ENCODE measurements at regions of chr19 and their contacts with region 1.

Region 1: DNA sequence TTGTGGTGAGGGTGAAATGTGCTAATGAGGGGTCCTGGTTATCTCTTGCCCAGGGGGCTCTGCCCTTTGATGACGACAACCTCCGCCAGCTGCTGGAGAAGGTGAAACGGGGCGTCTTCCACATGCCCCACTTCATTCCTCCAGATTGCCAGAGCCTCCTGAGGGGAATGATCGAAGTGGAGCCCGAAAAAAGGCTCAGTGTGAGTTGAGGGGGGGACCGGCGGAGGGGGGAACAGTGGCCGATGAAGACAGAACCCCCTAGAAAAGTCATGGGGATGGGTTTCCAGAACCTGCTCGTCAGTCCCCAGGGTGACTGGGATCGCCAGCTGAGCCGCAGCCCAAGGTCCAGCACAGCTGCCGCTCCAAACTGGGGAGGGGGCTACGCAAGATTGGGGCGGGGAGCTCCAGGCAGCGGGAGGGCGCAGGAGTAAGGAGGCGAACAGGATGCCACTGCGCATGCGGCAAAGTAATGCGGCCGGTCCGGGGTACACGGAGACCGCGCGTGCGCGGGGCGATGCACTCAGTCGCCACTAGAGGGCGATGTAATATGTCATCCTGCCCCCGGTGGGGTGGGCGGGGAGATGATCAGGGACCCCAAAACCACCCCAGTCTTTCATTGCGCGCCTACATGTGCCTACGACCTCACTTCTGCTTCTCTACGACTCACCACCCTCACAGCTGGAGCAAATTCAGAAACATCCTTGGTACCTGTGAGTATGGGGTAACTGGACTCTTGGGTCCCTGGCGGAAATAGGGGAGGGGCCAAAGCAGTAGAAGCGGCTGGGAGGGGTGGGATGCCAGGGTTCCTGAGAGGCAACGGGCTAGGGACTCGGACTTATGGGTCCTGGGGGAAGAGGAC is 17.9 kb downstream of the BRSK1 start:
- DNase-seq: peak; percentile 94
- H3K4me3 Mint-ChIP-seq: peak overlapping the region; percentile 76
- H3K27ac Mint-ChIP-seq: peak overlapping the region; percentile 73
- H3K4me1 Mint-ChIP-seq: peaks cover 14% of the 10 kb centered on the region
- H3K27me3 Mint-ChIP-seq: peaks cover 2% of the 10 kb centered on the region

Region 2: GRCh38 chr19:55279770-55280643 is 21.7 kb before region 1 on chr19 and contains the start of gene HSPBP1:
- CTCF ChIA-PET with region 1: interaction called, 13 read pairs
- POLR2A ChIA-PET with region 1: no interaction called
- DNase-seq: peak; percentile 98
- H3K4me3 Mint-ChIP-seq: peak within 1 kb of the TSS; percentile 100
- H3K27ac Mint-ChIP-seq: peak within 1 kb of the TSS; percentile 97
- H3K4me1 Mint-ChIP-seq: peaks cover 57% of the 10 kb centered on the region
- H3K27me3 Mint-ChIP-seq: peaks cover 8% of the 10 kb centered on the region
- total RNA-seq, gene HSPBP1: 28.9 to 29.0 TPM

Region 3: DNA sequence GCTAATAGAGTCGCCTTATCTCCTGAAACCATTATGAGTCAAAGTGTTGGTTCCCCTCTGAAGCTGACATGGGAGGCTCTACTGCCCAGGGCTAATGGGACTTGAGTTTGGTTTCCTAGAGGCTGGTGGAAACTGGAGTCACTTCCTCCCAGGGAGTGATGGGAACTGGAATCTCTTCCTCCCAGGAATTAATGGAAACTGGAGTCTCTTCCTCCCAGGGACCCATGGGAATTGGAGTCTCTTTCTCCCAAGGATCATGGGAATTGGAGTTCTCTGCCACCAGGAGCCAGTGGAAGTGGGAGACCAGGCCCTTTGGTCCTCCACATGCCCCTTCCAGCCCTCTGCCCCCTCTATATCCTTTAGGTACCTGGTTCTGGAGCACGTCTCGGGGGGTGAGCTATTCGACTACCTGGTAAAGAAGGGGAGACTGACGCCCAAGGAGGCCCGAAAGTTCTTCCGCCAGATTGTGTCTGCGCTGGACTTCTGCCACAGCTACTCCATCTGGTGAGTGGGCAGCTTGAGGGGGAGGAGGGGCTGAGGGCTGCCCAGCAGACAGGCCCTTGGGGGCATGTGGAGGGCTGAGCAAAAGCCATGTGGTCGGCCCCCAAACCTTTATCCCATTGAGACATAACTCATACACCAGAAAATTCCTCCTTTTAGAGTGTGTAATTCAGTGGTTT is 12.4 kb before region 1 on chr19:
- CTCF ChIA-PET with region 1: interaction called, 41 read pairs
- POLR2A ChIA-PET with region 1: no interaction called
- DNase-seq: no peak
- H3K4me3 Mint-ChIP-seq: no peak overlapping the region
- H3K27ac Mint-ChIP-seq: no peak overlapping the region
- H3K4me1 Mint-ChIP-seq: peaks cover 8% of the 10 kb centered on the region
- H3K27me3 Mint-ChIP-seq: peaks cover 2% of the 10 kb centered on the region

Region 4: DNA sequence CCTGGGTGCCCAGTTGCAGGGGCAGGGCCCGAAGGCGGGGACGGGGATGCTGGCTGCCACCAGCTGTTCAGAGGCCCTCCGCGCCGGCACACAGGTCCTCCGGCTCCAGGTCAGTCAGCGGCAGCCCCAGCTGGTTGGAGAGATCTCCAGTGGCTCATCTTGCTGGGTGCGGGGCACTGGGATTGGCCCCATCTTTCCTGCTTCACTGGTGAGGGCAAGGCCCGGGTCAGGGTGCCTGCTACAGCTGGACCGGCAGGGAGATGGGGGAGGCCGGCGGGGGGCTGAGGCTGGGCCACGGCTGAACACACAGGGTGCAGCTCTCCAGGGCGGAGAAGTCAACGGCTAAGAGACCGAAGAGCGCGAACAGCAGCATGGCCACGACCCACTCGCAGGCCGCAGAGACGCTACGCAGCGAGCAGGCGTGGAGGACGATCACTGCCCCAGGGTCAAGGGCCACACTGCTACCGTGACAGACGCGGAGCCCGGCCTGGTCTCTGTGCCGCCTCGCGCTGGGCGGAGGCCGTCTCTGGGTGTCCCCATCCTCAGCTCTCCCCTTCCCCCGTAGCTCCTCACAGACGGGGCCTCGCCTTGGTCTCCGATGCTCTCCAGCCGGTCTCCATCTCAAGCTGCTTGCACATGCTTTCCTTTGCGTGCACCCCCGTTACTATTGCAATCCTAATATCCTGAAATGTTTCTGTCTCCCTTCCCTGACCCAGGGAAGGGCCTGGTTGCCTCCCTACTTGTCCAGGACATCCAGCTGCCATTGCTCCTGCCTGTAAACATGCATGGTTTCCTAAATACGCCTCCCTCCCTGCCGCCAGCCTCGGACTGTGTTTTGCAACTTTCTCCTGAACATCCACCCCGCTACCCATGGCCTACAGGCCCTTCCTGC is 11.2 kb after region 1 on chr19:
- CTCF ChIA-PET with region 1: interaction called, 12 read pairs
- POLR2A ChIA-PET with region 1: no interaction called
- DNase-seq: no peak
- H3K4me3 Mint-ChIP-seq: no peak overlapping the region
- H3K27ac Mint-ChIP-seq: no peak overlapping the region
- H3K4me1 Mint-ChIP-seq: no peaks in the 10 kb centered on the region
- H3K27me3 Mint-ChIP-seq: no peaks in the 10 kb centered on the region

Region 5: GRCh38 chr19:55325172-55325571 is 23.5 kb after region 1 on chr19 and contains the start of gene TMEM150B:
- CTCF ChIA-PET with region 1: interaction called, 26 read pairs
- POLR2A ChIA-PET with region 1: no interaction called
- DNase-seq: no peak
- H3K4me3 Mint-ChIP-seq: no peak within 1 kb of the TSS
- H3K27ac Mint-ChIP-seq: no peak within 1 kb of the TSS
- H3K4me1 Mint-ChIP-seq: peaks cover 21% of the 10 kb centered on the region
- H3K27me3 Mint-ChIP-seq: peaks cover 16% of the 10 kb centered on the region
- total RNA-seq, gene TMEM150B: 1.0 to 2.0 TPM

Region 6: GRCh38 chr19:55339048-55339888 is 37.6 kb after region 1 on chr19 and contains the start of gene KMT5C:
- CTCF ChIA-PET with region 1: interaction called, 38 read pairs
- POLR2A ChIA-PET with region 1: interaction called, 22 read pairs
- DNase-seq: peak; percentile 100
- H3K4me3 Mint-ChIP-seq: peak within 1 kb of the TSS; percentile 90
- H3K27ac Mint-ChIP-seq: peak within 1 kb of the TSS; percentile 91
- H3K4me1 Mint-ChIP-seq: peaks cover 19% of the 10 kb centered on the region
- H3K27me3 Mint-ChIP-seq: peaks cover 12% of the 10 kb centered on the region
- total RNA-seq, gene KMT5C: 27.2 to 28.9 TPM

Region 7: GRCh38 chr19:55407800-55408532 is 106.3 kb after region 1 on chr19:
- CTCF ChIA-PET with region 1: interaction called, 4 read pairs
- POLR2A ChIA-PET with region 1: interaction called, 10 read pairs
- DNase-seq: peak; percentile 99
- H3K4me3 Mint-ChIP-seq: peak overlapping the region; percentile 83
- H3K27ac Mint-ChIP-seq: peak overlapping the region; percentile 97
- H3K4me1 Mint-ChIP-seq: peaks cover 45% of the 10 kb centered on the region
- H3K27me3 Mint-ChIP-seq: peaks cover 14% of the 10 kb centered on the region

Region 8: DNA sequence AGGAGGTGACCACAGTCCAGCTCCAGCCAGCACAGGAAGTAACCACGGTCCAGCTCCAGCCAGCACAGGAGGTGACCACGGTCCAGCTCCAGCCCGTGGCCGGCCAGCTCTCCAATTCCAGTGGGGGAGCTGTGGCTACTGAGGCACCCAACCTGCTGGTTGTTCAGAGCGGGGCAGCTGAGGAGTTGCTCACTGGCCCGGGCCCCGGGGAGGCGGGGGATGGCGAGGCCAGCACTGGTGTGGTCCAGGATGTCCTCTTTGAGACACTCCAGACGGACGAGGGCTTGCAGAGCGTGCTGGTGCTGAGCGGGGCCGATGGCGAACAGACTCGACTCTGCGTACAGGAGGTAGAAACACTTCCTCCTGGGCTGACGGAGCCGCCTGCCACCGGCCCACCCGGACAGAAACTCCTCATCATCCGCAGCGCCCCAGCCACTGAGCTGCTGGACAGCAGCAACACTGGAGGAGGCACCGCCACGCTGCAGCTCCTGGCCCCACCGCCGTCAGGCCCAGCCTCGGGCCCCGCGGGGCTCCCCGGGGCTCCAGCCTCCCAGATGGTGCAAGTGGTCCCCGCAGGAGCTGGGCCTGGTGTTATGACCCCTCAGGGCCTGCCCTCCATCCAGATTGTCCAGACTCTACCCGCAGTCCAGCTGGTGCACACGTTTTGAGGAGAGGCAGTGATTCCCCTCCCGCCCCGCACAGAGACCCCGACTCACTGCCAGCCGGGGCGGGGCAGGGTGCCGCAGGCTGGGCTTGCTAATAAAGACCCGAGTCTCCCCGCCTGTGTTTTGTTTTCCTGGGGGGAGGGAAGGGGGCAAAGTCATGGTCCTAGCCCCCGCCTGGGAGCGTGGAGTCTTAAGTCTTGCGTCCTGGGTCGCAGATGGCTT is 182.3 kb after region 1 on chr19:
- CTCF ChIA-PET with region 1: no interaction called
- POLR2A ChIA-PET with region 1: no interaction called
- DNase-seq: no peak
- H3K4me3 Mint-ChIP-seq: peak overlapping the region; percentile 73
- H3K27ac Mint-ChIP-seq: no peak overlapping the region
- H3K4me1 Mint-ChIP-seq: peaks cover 23% of the 10 kb centered on the region
- H3K27me3 Mint-ChIP-seq: no peaks in the 10 kb centered on the region

Region 9: GRCh38 chr19:55656988-55657747 is 355.5 kb after region 1 on chr19:
- CTCF ChIA-PET with region 1: no interaction called
- POLR2A ChIA-PET with region 1: no interaction called
- DNase-seq: no peak
- H3K4me3 Mint-ChIP-seq: peak overlapping the region; percentile 83
- H3K27ac Mint-ChIP-seq: peak overlapping the region; percentile 94
- H3K4me1 Mint-ChIP-seq: peaks cover 46% of the 10 kb centered on the region
- H3K27me3 Mint-ChIP-seq: no peaks in the 10 kb centered on the region